Activated B cell treated with CpG ODN at 0.5 μM for 24 hours (primary cell): ENCODE measurements at regions of chr2 and their contacts with region 1.

Region 1: DNA sequence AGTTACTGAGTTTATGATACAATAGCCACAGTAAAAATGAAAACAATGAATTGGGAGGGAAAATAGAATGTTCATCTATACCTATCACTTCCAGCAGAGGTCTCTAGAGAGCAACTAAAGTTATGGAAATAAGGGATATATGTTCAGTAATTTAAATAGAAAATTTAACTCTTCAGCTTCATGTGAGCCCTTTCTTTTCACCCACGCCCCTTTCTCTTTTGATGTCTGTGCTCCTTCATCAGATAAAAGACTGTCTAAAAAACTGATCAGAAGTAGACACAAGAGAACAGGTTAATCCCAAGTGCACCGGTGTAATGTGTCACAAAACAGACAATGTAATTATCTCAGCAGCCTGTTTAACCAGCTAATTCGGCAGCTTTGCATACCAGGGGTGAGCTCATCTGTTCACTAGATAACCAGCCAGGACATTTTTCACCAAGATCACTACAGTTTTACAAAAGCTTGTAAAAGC is 238.5 kb upstream of the ERBB4 start:
- DNase-seq: no peak
- ATAC-seq: peak; percentile 52
- H3K4me3 Mint-ChIP-seq: no peak overlapping the region
- H3K27ac Mint-ChIP-seq: no peak overlapping the region
- H3K4me1 Mint-ChIP-seq: peaks cover 3% of the 10 kb centered on the region
- H3K27me3 Mint-ChIP-seq: peaks cover 2% of the 10 kb centered on the region
- CTCF ChIP-seq: peak; percentile 73

Region 2: GRCh38 chr2:212609479-212609878 is 167.6 kb before region 1 on chr2:
- CTCF ChIA-PET with region 1: no interaction called
- POLR2A ChIA-PET with region 1: no interaction called
- intact Hi-C with region 1: no loop called
- DNase-seq: no peak
- ATAC-seq: no peak
- H3K4me3 Mint-ChIP-seq: no peak overlapping the region
- H3K27ac Mint-ChIP-seq: no peak overlapping the region
- H3K4me1 Mint-ChIP-seq: no peaks in the 10 kb centered on the region
- H3K27me3 Mint-ChIP-seq: no peaks in the 10 kb centered on the region
- CTCF ChIP-seq: no peak

Region 3: DNA sequence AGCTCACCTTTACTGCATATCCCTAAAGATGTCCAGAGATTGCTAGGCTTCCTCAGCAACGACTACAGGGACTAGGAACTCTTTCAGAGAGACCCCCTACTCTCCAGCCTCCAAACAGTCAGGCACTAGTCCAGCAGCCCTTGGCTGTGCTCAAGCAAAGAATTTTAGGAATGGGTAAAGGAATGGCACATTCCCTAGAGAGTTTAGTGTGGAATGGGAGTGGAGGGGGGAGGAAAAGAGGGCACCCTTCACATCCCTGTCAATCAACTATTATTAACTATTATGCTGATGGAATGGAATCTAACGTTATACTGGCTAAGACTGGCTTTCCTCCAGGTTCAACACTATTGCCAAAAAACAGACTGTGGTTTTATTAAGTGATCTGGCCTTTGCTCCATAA is 309.5 kb after region 1 on chr2:
- CTCF ChIA-PET with region 1: no interaction called
- POLR2A ChIA-PET with region 1: no interaction called
- intact Hi-C with region 1: loop called (anchors 1 kb)
- DNase-seq: no peak
- ATAC-seq: no peak
- H3K4me3 Mint-ChIP-seq: no peak overlapping the region
- H3K27ac Mint-ChIP-seq: no peak overlapping the region
- H3K4me1 Mint-ChIP-seq: peaks cover 11% of the 10 kb centered on the region
- H3K27me3 Mint-ChIP-seq: no peaks in the 10 kb centered on the region
- CTCF ChIP-seq: no peak

Region 4: DNA sequence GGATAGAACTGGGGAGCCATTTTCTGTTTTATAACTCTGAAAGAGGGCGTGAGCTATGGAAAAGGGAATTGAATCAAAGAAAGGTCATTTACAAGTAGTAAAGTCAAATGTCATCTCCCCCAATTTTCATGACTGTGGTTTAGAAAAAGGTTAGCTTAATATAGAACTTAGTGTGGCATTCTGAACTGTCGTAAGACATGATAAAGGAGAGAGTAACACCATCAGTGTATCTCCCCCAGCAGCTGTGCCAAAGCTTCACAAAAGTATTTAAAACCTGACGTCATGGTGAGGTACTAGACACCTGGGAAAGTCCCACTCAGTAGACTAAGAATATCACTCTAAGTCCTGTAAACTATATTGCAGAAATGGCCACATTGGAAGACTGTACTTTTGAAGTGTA is 380.2 kb after region 1 on chr2:
- CTCF ChIA-PET with region 1: interaction called, 86 read pairs
- POLR2A ChIA-PET with region 1: interaction called, 12 read pairs
- intact Hi-C with region 1: loop called (anchors 1 kb)
- DNase-seq: no peak
- ATAC-seq: peak; percentile 88
- H3K4me3 Mint-ChIP-seq: peak overlapping the region; percentile 49
- H3K27ac Mint-ChIP-seq: peak overlapping the region; percentile 80
- H3K4me1 Mint-ChIP-seq: peaks cover 58% of the 10 kb centered on the region
- H3K27me3 Mint-ChIP-seq: no peaks in the 10 kb centered on the region
- CTCF ChIP-seq: no peak